ENCODE measurements at regions of chr7 and their contacts with region 1.

Region 1: GRCh38 chr7:121547544-121548092 is 151.5 kb upstream of the FAM3C start:
- DNase-seq: no peak
- ATAC-seq: peak; percentile 89
- H3K4me3 ChIP-seq: no peak overlapping the region
- H3K27ac ChIP-seq: no peak overlapping the region
- H3K4me1 ChIP-seq: no peaks in the 10 kb centered on the region
- H3K27me3 ChIP-seq: no peaks in the 10 kb centered on the region
- CTCF ChIP-seq: peak; percentile 60 to 85 (median 64); a peak in 5 of 6 replicates
- EP300 ChIP-seq: no peak
- POLR2A ChIP-seq: no peak
- RAD21 ChIP-seq: peak; percentile 98

Region 2: DNA sequence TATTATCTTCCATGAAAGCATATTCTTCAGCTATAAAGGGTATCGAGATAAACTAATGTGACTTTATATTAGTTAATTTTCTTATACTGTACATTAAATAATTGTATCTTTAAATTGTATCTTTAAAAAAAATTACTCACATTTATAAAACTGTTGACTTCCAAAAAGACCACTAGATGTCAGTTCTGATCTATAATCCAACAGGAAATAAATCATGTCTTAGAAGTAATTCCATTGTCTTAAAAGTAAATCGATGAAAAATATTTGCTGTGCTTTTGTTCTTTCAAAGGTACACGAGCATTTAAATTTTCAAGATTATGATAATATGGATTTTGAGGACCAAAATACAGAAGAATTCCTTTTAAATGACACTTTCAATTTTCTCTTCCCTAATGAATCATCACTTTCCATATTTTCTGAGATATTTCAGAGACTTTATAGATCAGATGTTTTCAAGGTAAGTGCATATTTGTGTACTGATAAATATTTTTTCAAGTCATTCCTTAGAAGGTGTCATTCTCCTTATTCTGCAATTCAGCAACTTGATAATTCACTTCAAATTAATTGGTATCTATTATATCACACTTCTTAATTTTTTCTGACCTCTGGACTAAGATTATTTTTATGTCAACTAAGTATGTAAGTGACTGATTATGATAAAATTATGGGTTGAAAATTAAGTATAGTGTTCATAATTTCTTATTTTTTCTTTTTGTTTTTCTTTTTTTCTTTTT is 420.6 kb before region 1 on chr7:
- CTCF ChIA-PET with region 1: interaction called, 4 read pairs
- POLR2A ChIA-PET with region 1: no interaction called
- RAD21 ChIA-PET with region 1: interaction called, 5 read pairs
- SMC1A ChIA-PET with region 1: interaction called, 6 read pairs
- in situ Hi-C with region 1: loop called (anchors 10 kb)
- intact Hi-C with region 1: loop called (anchors 2 kb)
- DNase-seq: no peak
- ATAC-seq: no peak
- H3K4me3 ChIP-seq: no peak overlapping the region
- H3K27ac ChIP-seq: no peak overlapping the region
- H3K4me1 ChIP-seq: no peaks in the 10 kb centered on the region
- H3K27me3 ChIP-seq: no peaks in the 10 kb centered on the region
- CTCF ChIP-seq: peak in 2 of 3 experiments; percentile 5 to 24; a peak in 1 of 6 replicates
- EP300 ChIP-seq: no peak
- POLR2A ChIP-seq: no peak
- RAD21 ChIP-seq: peak; percentile 54

Region 3: GRCh38 chr7:121337398-121337797 is 210.2 kb before region 1 on chr7:
- CTCF ChIA-PET with region 1: interaction called, 10 read pairs
- POLR2A ChIA-PET with region 1: no interaction called
- RAD21 ChIA-PET with region 1: interaction called, 4 read pairs
- SMC1A ChIA-PET with region 1: interaction called, 6 read pairs
- in situ Hi-C with region 1: no loop called
- intact Hi-C with region 1: no loop called
- DNase-seq: no peak
- ATAC-seq: peak; percentile 78
- H3K4me3 ChIP-seq: no peak overlapping the region
- H3K27ac ChIP-seq: no peak overlapping the region
- H3K4me1 ChIP-seq: no peaks in the 10 kb centered on the region
- H3K27me3 ChIP-seq: no peaks in the 10 kb centered on the region
- CTCF ChIP-seq: peak in 2 of 3 experiments; percentile 20 to 50; a peak in 3 of 6 replicates
- EP300 ChIP-seq: no peak
- POLR2A ChIP-seq: no peak
- RAD21 ChIP-seq: peak; percentile 50

Region 4: DNA sequence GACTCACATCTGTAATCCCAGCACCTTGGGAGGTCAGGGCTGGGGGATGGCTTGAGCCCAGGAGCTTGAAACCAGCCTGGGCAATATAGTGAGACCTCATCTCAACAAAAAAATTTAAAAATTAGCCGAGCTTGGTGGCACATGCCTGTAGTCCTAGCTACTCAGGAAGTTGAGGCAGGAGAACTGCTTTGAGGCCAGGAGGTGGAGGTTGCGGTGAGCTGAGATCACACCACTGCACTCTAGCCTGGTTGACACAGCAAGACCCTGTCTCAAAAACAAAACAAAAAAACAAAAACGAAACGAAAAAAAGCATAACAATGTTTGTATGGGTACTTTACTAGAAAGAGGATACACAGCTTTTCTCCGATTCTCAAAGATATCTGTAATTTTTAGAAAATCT is 187.1 kb before region 1 on chr7:
- CTCF ChIA-PET with region 1: interaction called, 10 read pairs
- POLR2A ChIA-PET with region 1: interaction called, 7 read pairs
- RAD21 ChIA-PET with region 1: interaction called, 3 read pairs
- SMC1A ChIA-PET with region 1: interaction called, 19 read pairs
- in situ Hi-C with region 1: loop called (anchors 5 kb)
- intact Hi-C with region 1: no loop called
- DNase-seq: no peak
- ATAC-seq: no peak
- H3K4me3 ChIP-seq: no peak overlapping the region
- H3K27ac ChIP-seq: no peak overlapping the region
- H3K4me1 ChIP-seq: no peaks in the 10 kb centered on the region
- H3K27me3 ChIP-seq: no peaks in the 10 kb centered on the region
- CTCF ChIP-seq: no peak
- EP300 ChIP-seq: no peak
- POLR2A ChIP-seq: no peak
- RAD21 ChIP-seq: no peak

Region 5: GRCh38 chr7:121395961-121396757 is 151.5 kb before region 1 on chr7 and contains the start of gene FAM3C:
- CTCF ChIA-PET with region 1: interaction called, 9 read pairs
- POLR2A ChIA-PET with region 1: interaction called, 5 read pairs
- RAD21 ChIA-PET with region 1: interaction called, 29 read pairs
- SMC1A ChIA-PET with region 1: interaction called, 45 read pairs
- in situ Hi-C with region 1: no loop called
- intact Hi-C with region 1: no loop called
- DNase-seq: peak; percentile 53
- ATAC-seq: peak; percentile 86
- H3K4me3 ChIP-seq: peak within 1 kb of the TSS; percentile 69
- H3K27ac ChIP-seq: peak within 1 kb of the TSS; percentile 66
- H3K4me1 ChIP-seq: peaks cover 8% of the 10 kb centered on the region
- H3K27me3 ChIP-seq: no peaks in the 10 kb centered on the region
- CTCF ChIP-seq: peak; percentile 66 to 94 (median 80); a peak in 5 of 6 replicates
- EP300 ChIP-seq: no peak; a peak in 1 of 4 replicates
- POLR2A ChIP-seq: peak; percentile 94
- RAD21 ChIP-seq: peak; percentile 77
- polyA plus RNA-seq, gene FAM3C: 11.0 to 13.6 TPM